GM10248 (cell line): ENCODE measurements at regions of chr2 and their contacts with region 1.

Region 1: GRCh38 chr2:137910641-137911040 is 53.6 kb upstream of the HNMT start:
- DNase-seq: no peak
- CTCF ChIP-seq: peak; percentile 36

Region 2: DNA sequence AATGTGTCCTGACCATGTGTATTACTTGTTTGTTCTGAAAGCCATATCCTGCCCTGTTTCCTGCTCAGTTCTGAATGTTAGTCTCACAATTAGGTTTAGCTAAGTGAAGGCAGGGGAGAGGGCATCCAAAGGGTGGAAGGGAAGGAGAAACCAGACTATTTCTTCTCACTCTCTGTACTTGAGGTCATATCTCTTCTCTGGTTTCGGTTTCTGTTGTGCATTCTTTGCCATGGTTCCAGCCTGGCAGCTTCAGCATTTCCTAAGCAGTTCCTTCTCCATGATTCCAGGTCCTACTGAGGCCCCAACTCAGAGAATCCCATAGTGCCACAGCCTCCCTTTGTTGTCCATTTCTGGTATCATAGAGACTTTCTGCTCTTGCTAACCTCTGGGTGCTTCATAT is 13.4 kb after region 1 on chr2:
- CTCF ChIA-PET with region 1: interaction called, 11 read pairs
- POLR2A ChIA-PET with region 1: no interaction called
- DNase-seq: no peak
- CTCF ChIP-seq: no peak